HepG2 (cell line): ENCODE measurements at regions of chr9 and their contacts with region 1.

Region 1: GRCh38 chr9:36995927-36996705 is 38.0 kb downstream of the PAX5 start:
- DNase-seq: peak; percentile 45
- ATAC-seq: peak; percentile 94
- H3K4me3 ChIP-seq: peak overlapping the region in 2 of 3 experiments; percentile 22 to 65; a peak in 3 of 6 replicates
- H3K27ac ChIP-seq: no peak overlapping the region
- H3K4me1 ChIP-seq: 0 out of 2 replicates have a peak, but pooled peaks cover 5% of the 10 kb centered on the region
- H3K27me3 ChIP-seq: peaks cover 0 to 35% of the 10 kb centered on the region in 2 experiments; a peak in 3 of 5 replicates
- CTCF ChIP-seq: peak; percentile 89
- EP300 ChIP-seq: no peak
- POLR2A ChIP-seq: no peak
- RAD21 ChIP-seq: peak; percentile 85

Region 2: GRCh38 chr9:36798350-36799065 is 197.6 kb before region 1 on chr9:
- CTCF ChIA-PET with region 1: interaction called, 5 read pairs
- POLR2A ChIA-PET with region 1: no interaction called
- in situ Hi-C with region 1: no loop called
- intact Hi-C with region 1: loop called (anchors 2 kb)
- DNase-seq: peak; percentile 24
- ATAC-seq: peak; percentile 92
- H3K4me3 ChIP-seq: no peak overlapping the region
- H3K27ac ChIP-seq: no peak overlapping the region
- H3K4me1 ChIP-seq: peaks cover 10% of the 10 kb centered on the region
- H3K27me3 ChIP-seq: peaks cover 0 to 20% of the 10 kb centered on the region in 2 experiments; a peak in 4 of 5 replicates
- CTCF ChIP-seq: peak; percentile 79
- EP300 ChIP-seq: no peak
- POLR2A ChIP-seq: no peak
- RAD21 ChIP-seq: peak; percentile 44; the same call in 1 of the 2 replicates

Region 3: DNA sequence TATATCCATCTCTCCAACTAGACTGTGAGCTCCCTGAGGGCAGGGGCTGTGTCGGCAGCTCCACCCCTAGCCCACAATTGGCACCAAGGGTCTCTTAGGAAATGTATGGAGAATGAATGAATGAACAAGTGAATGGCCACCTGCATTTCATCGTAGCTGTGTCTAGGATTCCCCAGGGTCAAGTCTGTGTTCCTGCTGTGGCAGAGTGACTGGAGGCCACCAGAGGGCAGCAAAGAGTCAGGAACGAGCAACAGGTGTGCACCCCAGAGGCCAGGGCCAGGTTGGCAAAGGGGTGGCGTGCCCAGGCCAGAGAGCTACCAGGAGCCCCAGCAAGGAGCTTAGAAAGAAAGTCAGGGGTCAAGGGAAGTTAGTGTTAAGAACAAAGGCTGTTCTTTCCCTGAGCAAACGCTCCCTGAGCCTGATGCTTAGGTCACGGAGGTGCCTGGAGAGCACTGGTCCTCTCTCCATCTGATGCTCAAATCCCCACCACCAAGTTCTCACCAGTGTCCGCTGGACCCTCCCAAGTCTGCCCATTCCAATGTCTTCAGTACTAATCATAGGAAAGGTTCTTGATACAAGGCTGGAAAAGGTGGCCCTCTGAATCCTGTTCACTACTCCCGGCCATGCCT is 122.8 kb before region 1 on chr9:
- CTCF ChIA-PET with region 1: interaction called, 19 read pairs
- POLR2A ChIA-PET with region 1: no interaction called
- in situ Hi-C with region 1: no loop called
- intact Hi-C with region 1: loop called (anchors 5 kb)
- DNase-seq: peak; percentile 62
- ATAC-seq: peak; percentile 89
- H3K4me3 ChIP-seq: no peak overlapping the region
- H3K27ac ChIP-seq: no peak overlapping the region
- H3K4me1 ChIP-seq: peaks cover 39% of the 10 kb centered on the region
- H3K27me3 ChIP-seq: peaks cover 3 to 50% of the 10 kb centered on the region in 2 experiments; a peak in 4 of 5 replicates
- CTCF ChIP-seq: peak; percentile 92
- EP300 ChIP-seq: no peak
- POLR2A ChIP-seq: no peak
- RAD21 ChIP-seq: peak; percentile 78

Region 4: DNA sequence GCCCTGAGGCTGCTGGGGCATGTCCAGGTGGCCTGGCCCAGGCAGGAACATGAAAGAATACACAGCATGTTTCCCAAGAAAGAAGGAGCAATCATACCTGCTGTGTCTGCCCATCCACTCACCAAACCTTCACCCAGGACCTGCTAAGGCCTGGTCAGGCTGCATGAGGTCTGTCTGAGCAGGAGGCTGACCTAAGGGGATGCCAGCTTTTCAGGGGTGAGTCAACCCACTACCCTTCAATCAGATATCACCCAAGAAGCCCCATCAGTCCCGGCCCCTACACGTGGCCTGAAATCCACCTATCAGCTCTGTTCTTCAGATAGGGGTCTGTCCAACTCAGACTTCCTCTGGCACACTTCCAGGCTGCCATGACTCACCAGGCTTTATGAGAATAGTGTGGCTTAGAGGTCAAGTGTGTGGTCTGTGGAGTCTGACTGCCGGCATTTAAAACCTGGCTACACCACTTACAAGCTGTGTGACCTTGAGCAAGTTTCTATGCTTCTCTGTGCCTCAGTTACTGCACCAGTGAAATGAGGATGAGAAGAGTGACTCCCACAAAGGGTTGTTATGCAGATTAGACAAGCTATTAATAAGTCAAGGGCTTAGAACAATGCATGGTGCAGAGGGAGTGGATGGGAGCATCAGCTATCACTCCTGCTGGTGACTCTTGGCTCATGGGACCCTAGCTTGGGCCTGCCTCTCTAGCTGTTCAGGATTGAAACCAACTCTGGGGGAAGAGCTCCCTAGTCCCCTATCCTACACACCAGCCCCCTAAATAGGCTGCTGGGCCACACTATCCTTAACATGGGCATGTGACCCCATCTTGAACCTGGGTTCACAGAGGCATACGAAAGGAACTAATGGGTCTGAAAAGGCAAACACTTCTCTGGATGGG is 92.3 kb before region 1 on chr9:
- CTCF ChIA-PET with region 1: no interaction called
- POLR2A ChIA-PET with region 1: no interaction called
- in situ Hi-C with region 1: no loop called
- intact Hi-C with region 1: no loop called
- DNase-seq: peak; percentile 12
- ATAC-seq: no peak
- H3K4me3 ChIP-seq: no peak overlapping the region
- H3K27ac ChIP-seq: no peak overlapping the region
- H3K4me1 ChIP-seq: no peaks in the 10 kb centered on the region
- H3K27me3 ChIP-seq: peaks cover 4 to 5% of the 10 kb centered on the region in 2 experiments; a peak in 2 of 5 replicates
- CTCF ChIP-seq: no peak
- EP300 ChIP-seq: no peak
- POLR2A ChIP-seq: no peak
- RAD21 ChIP-seq: no peak

Region 5: GRCh38 chr9:36961561-36962298 is 34.4 kb before region 1 on chr9:
- CTCF ChIA-PET with region 1: no interaction called
- POLR2A ChIA-PET with region 1: no interaction called
- in situ Hi-C with region 1: no loop called
- intact Hi-C with region 1: no loop called
- DNase-seq: no peak
- ATAC-seq: no peak
- H3K4me3 ChIP-seq: no peak overlapping the region
- H3K27ac ChIP-seq: no peak overlapping the region
- H3K4me1 ChIP-seq: no peaks in the 10 kb centered on the region
- H3K27me3 ChIP-seq: peaks cover 0 to 20% of the 10 kb centered on the region in 2 experiments; a peak in 3 of 5 replicates
- CTCF ChIP-seq: no peak
- EP300 ChIP-seq: no peak
- POLR2A ChIP-seq: no peak
- RAD21 ChIP-seq: no peak

Region 6: DNA sequence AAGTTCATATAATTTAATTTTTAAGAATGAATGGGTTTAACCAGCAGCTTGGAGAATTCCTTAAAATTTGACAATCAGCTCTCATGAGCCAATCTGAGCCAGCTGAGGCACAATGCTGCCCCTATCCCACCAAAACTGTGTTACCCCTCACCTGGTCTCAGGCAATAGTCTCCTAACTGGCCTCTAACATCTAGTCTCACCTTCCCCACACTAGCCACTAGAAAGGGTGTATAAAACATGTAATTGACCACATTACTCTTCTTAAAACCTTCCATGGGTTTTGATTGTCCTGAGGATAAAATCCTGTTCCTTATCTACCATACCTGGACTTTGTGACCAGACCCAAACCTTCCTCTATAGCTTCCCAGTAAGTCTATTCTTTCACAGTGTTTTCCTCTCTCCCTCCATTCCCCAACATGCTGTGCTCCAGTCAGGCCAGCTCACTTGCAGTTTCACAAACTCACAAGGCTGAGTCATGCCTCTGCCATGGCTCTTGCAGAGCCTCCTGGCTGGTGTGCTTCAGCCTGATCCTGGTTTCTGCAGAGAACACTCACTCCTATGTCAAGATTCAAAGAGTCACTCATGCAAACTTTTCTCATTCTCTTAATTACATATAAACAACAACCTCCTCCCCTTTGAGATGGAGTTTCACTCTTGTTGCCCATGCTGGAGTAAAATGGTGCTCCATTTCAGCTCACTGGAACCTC is 108.2 kb after region 1 on chr9:
- CTCF ChIA-PET with region 1: no interaction called
- POLR2A ChIA-PET with region 1: no interaction called
- in situ Hi-C with region 1: no loop called
- intact Hi-C with region 1: no loop called
- DNase-seq: no peak
- ATAC-seq: peak; percentile 71
- H3K4me3 ChIP-seq: no peak overlapping the region
- H3K27ac ChIP-seq: no peak overlapping the region
- H3K4me1 ChIP-seq: peaks cover 12% of the 10 kb centered on the region
- H3K27me3 ChIP-seq: no peaks in the 10 kb centered on the region
- CTCF ChIP-seq: no peak
- EP300 ChIP-seq: no peak
- POLR2A ChIP-seq: no peak
- RAD21 ChIP-seq: no peak

Region 7: DNA sequence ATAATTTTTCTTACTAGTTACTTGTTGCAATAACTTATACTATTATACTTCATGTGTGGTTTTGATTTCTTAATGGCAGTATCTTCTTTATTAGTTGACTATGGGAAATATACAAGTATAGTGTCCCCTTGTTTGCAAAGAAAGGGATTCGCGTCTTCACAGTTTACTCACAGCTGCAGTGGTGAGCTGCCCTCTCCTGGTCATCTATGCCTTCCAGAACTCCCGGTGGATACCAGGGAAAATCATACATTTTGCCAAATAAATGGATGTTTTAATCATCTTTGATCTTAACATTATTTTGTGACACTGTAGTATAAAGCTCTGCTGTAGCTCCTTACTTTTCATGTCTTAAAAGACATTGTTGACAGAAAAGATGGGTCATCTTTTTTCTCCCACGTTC is 266.3 kb after region 1 on chr9:
- CTCF ChIA-PET with region 1: no interaction called
- POLR2A ChIA-PET with region 1: no interaction called
- in situ Hi-C with region 1: loop called (anchors 10 kb)
- intact Hi-C with region 1: loop called (anchors 5 kb)
- DNase-seq: no peak
- ATAC-seq: no peak
- H3K4me3 ChIP-seq: no peak overlapping the region
- H3K27ac ChIP-seq: no peak overlapping the region
- H3K4me1 ChIP-seq: no peaks in the 10 kb centered on the region
- H3K27me3 ChIP-seq: no peaks in the 10 kb centered on the region
- CTCF ChIP-seq: peak; percentile 47
- EP300 ChIP-seq: no peak
- POLR2A ChIP-seq: no peak
- RAD21 ChIP-seq: no peak

Region 8: GRCh38 chr9:37329576-37329975 is 333.5 kb after region 1 on chr9:
- CTCF ChIA-PET with region 1: no interaction called
- POLR2A ChIA-PET with region 1: no interaction called
- in situ Hi-C with region 1: no loop called
- intact Hi-C with region 1: loop called (anchors 1 kb)
- DNase-seq: no peak
- ATAC-seq: no peak
- H3K4me3 ChIP-seq: no peak overlapping the region
- H3K27ac ChIP-seq: no peak overlapping the region
- H3K4me1 ChIP-seq: no peaks in the 10 kb centered on the region
- H3K27me3 ChIP-seq: no peaks in the 10 kb centered on the region
- CTCF ChIP-seq: peak; percentile 49
- EP300 ChIP-seq: no peak
- POLR2A ChIP-seq: no peak
- RAD21 ChIP-seq: no peak

Region 9: GRCh38 chr9:37390759-37391158 is 394.6 kb after region 1 on chr9:
- CTCF ChIA-PET with region 1: no interaction called
- POLR2A ChIA-PET with region 1: no interaction called
- in situ Hi-C with region 1: loop called (anchors 5 kb)
- intact Hi-C with region 1: loop called (anchors 1 kb)
- DNase-seq: peak; percentile 30
- ATAC-seq: peak; percentile 65
- H3K4me3 ChIP-seq: no peak overlapping the region
- H3K27ac ChIP-seq: no peak overlapping the region
- H3K4me1 ChIP-seq: peaks cover 24% of the 10 kb centered on the region
- H3K27me3 ChIP-seq: peaks cover 1 to 6% of the 10 kb centered on the region in 2 experiments; a peak in 2 of 5 replicates
- CTCF ChIP-seq: peak; percentile 65
- EP300 ChIP-seq: no peak
- POLR2A ChIP-seq: no peak
- RAD21 ChIP-seq: peak; percentile 10; the same call in 1 of the 2 replicates

Region 10: DNA sequence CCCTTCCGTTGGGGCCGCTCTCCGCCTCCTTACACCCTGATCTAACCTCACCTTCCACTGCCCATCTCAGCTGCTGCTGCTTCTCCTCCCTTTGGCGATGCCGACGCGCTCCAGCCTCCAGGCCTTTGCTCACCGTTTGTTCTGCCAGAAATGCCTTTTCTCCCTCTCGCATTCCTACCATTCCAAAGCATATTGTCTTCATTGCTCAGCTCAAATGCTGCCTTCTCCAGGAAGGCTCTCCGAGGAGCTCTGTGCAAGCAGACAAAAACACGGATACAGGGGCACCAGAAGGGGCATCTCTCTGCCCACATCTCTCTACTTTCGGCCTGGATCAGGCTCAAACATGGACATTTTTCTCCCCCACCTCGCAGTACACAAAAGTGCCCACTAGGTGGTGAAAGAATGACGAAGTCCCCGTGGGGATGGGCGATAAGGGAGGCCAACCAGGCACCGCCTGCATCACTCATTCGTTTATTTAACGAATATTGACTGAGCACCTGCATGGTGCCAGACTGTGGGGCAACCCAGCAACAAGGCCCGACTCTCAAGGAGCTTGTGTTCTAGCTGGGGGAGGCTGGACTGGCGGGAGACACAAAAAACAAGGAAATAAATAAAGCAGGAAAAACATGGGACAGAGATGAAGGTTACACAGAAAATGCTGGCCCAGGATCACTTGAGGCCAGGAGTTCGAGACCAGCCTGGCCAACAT is 419.0 kb after region 1 on chr9:
- CTCF ChIA-PET with region 1: interaction called, 5 read pairs
- POLR2A ChIA-PET with region 1: no interaction called
- in situ Hi-C with region 1: no loop called
- intact Hi-C with region 1: loop called (anchors 5 kb)
- DNase-seq: peak; percentile 76
- ATAC-seq: peak; percentile 42
- H3K4me3 ChIP-seq: peak overlapping the region; percentile 7 to 51 (median 29); a peak in 4 of 6 replicates
- H3K27ac ChIP-seq: no peak overlapping the region
- H3K4me1 ChIP-seq: peaks cover 76% of the 10 kb centered on the region
- H3K27me3 ChIP-seq: no peaks in the 10 kb centered on the region
- CTCF ChIP-seq: peak; percentile 90
- EP300 ChIP-seq: no peak
- POLR2A ChIP-seq: no peak
- RAD21 ChIP-seq: peak; percentile 50; the same call in 1 of the 2 replicates